Mammary epithelial cell (primary cell): ENCODE measurements at regions of chr12 and their contacts with region 1.

Region 1: GRCh38 chr12:45695015-45695414 is 34.5 kb upstream of the ARID2 start:
- DNase-seq: no peak
- H3K4me3 ChIP-seq: no peak overlapping the region
- H3K27ac ChIP-seq: no peak overlapping the region
- H3K4me1 ChIP-seq: no peaks in the 10 kb centered on the region
- H3K27me3 ChIP-seq: no peaks in the 10 kb centered on the region
- CTCF ChIP-seq: no peak

Region 2: DNA sequence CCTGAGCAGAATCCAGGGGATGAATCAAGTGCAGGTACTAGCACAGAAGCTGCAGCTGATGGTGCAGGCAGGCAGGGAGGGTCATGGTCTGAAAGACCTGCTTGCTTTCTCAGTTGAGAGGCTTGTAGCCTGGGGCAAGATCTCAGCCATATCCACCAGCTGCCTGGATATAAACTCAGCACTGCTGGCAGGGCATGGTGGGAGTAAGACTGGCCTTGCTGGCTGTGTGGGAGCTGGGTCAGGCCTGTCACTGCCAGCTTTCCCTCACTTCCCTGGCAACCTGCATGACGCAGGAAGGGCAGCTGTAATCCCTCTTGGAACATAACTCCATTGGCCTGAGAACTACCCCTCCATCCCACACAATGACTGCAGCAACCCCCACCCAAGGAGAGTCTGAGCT is 249.0 kb before region 1 on chr12:
- CTCF ChIA-PET with region 1: no interaction called
- dilution Hi-C with region 1: no loop called
- in situ Hi-C with region 1: no loop called
- intact Hi-C with region 1: no loop called
- DNase-seq: no peak
- H3K4me3 ChIP-seq: no peak overlapping the region
- H3K27ac ChIP-seq: no peak overlapping the region
- H3K4me1 ChIP-seq: no peaks in the 10 kb centered on the region
- H3K27me3 ChIP-seq: peaks cover 2% of the 10 kb centered on the region
- CTCF ChIP-seq: no peak

Region 3: GRCh38 chr12:45660330-45660729 is 34.7 kb before region 1 on chr12:
- CTCF ChIA-PET with region 1: no interaction called
- dilution Hi-C with region 1: loop called (anchors 5 kb)
- in situ Hi-C with region 1: no loop called
- intact Hi-C with region 1: no loop called
- DNase-seq: peak; percentile 79
- H3K4me3 ChIP-seq: no peak overlapping the region
- H3K27ac ChIP-seq: no peak overlapping the region
- H3K4me1 ChIP-seq: no peaks in the 10 kb centered on the region
- H3K27me3 ChIP-seq: no peaks in the 10 kb centered on the region
- CTCF ChIP-seq: no peak